ENCODE measurements at regions of chr19 and their contacts with region 1.

Region 1: DNA sequence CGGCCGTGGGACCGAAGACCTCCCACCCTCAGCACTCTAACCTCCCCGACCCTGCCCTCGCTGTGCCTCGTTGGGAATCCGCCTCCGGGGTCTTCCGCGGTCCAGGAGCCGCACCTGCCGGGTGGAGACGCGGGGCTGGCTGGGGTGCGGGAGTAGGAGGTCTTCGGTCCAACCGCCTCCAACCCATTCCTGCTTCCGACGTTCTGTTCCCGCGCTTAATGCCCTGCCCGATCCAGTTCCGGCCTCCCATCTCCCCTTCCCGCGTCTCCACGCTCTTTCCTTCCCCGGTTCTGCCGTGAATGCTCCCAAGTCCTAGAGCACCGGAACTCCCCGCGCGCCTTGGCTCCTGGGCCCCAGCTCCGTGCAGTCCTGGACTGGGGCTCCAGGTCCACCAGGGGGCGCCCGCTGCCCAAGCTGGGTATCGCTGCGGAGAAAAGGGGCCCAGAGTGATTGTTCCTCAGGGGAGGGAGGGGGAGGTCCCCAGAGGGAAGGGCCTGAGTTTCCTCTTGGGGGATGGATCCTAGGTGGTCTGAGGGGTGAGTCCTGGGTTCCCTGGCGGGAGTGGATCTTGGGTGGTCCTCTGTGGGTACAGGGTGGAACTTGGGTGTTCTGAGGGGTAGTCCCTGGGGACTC is 14.1 kb upstream of the TNFSF9 start:
- DNase-seq: peak; percentile 93
- ATAC-seq: peak; percentile 93 to 95

Region 2: GRCh38 chr19:6632002-6632621 is 115.3 kb after region 1 on chr19:
- intact Hi-C with region 1: loop called (anchors 2 to 5 kb)
- DNase-seq: peak; percentile 58
- ATAC-seq: peak; percentile 44 to 66

Region 3: GRCh38 chr19:6737284-6738046 is 220.7 kb after region 1 on chr19 and contains the start of gene GPR108:
- intact Hi-C with region 1: loop called in 1 of 2 experiments (anchors 5 kb)
- DNase-seq: peak; percentile 100
- ATAC-seq: peak; percentile 83 to 86
- total RNA-seq, gene GPR108: 25.7 to 35.4 TPM